ENCODE measurements at regions of chr10 and their contacts with region 1.

Region 1: GRCh38 chr10:11225935-11226334 is 208.3 kb downstream of the CELF2 start:
- DNase-seq: no peak

Region 2: GRCh38 chr10:10346390-10347150 is 879.4 kb before region 1 on chr10:
- intact Hi-C with region 1: no loop called
- DNase-seq: no peak

Region 3: GRCh38 chr10:11246752-11247467 is 21.0 kb after region 1 on chr10:
- intact Hi-C with region 1: loop called in 1 of 2 experiments (anchors 1 kb)
- DNase-seq: no peak

Measured in posterior vena cava (tissue), 2 donors.